Activated B cell treated with CpG ODN at 0.5 μM for 24 hours (primary cell): ENCODE measurements at regions of chr11 and their contacts with region 1.

Region 1: DNA sequence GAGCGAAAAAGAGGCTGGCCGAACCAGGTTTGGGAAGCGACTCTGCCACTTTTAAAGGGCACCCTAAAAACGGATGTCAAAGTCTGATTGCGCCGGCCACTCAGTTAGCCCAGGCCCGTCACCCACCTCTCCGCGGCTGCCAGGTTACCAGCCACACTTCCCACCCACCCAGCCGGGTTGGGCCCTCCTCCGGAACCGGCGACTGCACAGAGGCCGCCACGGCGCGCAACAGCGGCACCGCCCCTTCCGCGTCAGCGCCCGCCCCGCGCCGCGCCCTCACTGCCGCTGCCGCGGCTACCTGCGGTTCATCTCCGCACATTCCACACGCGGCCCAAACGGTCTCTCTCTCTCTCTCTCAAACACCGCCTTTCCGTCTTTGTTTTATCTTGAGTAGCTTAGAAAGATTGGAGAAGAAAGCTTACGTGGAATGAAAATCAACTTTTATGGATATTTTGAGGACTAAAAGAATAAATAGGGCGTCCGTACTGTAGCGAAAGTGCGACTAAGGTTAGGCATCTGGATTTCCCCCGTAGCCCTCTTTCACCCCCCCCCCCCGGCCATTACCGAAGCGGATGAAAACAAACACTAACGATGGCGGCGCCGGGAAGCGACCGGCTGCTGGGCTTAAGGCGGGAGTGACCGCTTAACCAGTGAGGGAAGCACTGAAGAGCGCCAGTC is at the starts of genes ATG13 and HARBI1:
- DNase-seq: peak; percentile 91
- ATAC-seq: peak; percentile 94
- H3K4me3 Mint-ChIP-seq: peak within 1 kb of the TSS; percentile 93
- H3K27ac Mint-ChIP-seq: peak within 1 kb of the TSS; percentile 100
- H3K4me1 Mint-ChIP-seq: peaks cover 30% of the 10 kb centered on the region
- H3K27me3 Mint-ChIP-seq: no peaks in the 10 kb centered on the region
- CTCF ChIP-seq: no peak
- total RNA-seq, gene ATG13: 49.1 and 73.7 TPM in 2 replicates
- total RNA-seq, gene HARBI1: 5.4 and 6.5 TPM in 2 replicates

Region 2: DNA sequence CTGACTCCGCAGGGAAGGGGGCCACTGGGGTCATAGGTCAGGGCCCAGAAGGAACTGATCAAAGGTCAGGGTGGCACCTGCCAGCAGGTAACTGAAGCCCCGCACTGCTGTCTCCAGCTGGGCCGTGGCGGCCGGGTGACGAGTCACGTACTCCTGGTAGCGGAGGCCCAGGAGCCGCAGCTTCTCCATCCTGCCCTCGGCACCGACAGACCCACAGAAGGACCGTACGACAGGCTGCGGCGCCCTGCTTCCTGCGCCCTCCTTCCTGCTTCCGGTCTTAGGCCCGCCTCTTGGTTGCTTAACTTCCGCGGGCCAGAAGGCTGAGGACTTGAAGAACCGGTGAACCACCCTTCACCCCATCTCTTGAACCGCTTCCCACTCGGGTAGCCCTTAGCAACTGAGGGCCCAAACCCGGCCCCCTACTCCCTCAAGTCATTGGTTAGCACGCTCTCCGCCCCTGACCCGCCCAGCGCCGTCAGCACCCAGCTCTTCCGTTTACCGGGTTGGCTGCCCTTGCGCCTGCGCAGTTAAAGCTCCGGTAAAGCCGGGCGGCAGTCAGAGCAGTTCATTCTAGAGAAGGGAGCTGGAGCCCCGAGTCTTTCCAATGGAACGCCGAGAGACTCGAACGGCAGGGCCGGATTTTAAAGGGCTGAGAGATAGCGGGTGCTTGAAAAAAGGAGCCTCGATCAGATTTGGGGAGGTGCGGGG is 699.4 kb before region 1 on chr11 and contains the start of gene PEX16:
- CTCF ChIA-PET with region 1: no interaction called
- POLR2A ChIA-PET with region 1: no interaction called
- intact Hi-C with region 1: loop called (anchors 1 kb)
- DNase-seq: peak; percentile 87
- ATAC-seq: peak; percentile 85
- H3K4me3 Mint-ChIP-seq: peak within 1 kb of the TSS; percentile 94
- H3K27ac Mint-ChIP-seq: peak within 1 kb of the TSS; percentile 97
- H3K4me1 Mint-ChIP-seq: peaks cover 61% of the 10 kb centered on the region
- H3K27me3 Mint-ChIP-seq: no peaks in the 10 kb centered on the region
- CTCF ChIP-seq: no peak
- total RNA-seq, gene PEX16: 72.0 and 77.7 TPM in 2 replicates

Region 3: GRCh38 chr11:46346886-46347636 is 270.1 kb before region 1 on chr11 and contains the start of gene DGKZ:
- CTCF ChIA-PET with region 1: no interaction called
- POLR2A ChIA-PET with region 1: no interaction called
- intact Hi-C with region 1: loop called (anchors 1 kb)
- DNase-seq: peak; percentile 99
- ATAC-seq: peak; percentile 93
- H3K4me3 Mint-ChIP-seq: peak within 1 kb of the TSS; percentile 90
- H3K27ac Mint-ChIP-seq: peak within 1 kb of the TSS; percentile 83
- H3K4me1 Mint-ChIP-seq: peaks cover 52% of the 10 kb centered on the region
- H3K27me3 Mint-ChIP-seq: no peaks in the 10 kb centered on the region
- CTCF ChIP-seq: no peak
- total RNA-seq, gene DGKZ: 48.1 and 53.6 TPM in 2 replicates

Region 4: GRCh38 chr11:46529095-46529905 is 87.8 kb before region 1 on chr11:
- CTCF ChIA-PET with region 1: interaction called, 4 read pairs
- POLR2A ChIA-PET with region 1: no interaction called
- intact Hi-C with region 1: loop called (anchors 1 kb)
- DNase-seq: peak; percentile 41
- ATAC-seq: peak; percentile 99
- H3K4me3 Mint-ChIP-seq: no peak overlapping the region
- H3K27ac Mint-ChIP-seq: no peak overlapping the region
- H3K4me1 Mint-ChIP-seq: peaks cover 22% of the 10 kb centered on the region
- H3K27me3 Mint-ChIP-seq: no peaks in the 10 kb centered on the region
- CTCF ChIP-seq: no peak

Region 5: DNA sequence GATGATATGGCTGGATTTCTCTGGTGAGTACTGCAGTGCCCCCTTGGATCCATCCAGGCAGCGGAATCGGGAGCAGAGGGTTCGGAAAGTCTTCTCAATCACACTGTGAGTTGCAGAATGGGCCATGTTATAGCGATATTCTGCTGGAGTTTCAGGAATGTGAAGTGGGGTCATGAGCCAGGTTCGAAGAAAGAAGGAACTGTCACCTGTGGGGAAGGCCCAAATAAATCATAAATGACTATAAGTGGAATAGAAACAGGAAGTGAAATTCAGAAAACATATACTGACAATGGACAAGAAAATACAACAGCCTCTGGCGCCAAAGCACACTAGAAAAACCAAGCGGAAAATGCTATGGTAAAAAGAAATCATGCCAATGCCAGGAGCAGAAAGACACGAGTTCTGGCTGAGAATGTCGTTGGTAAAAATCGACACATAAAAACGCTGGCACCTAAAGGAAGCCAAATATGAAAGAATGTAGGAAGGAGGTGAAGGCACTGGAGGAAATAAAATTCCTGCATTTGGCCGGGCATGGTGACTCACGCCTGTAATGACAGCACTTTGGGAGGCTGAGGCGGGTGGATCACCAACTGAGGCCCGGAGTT is 13.3 kb before region 1 on chr11:
- CTCF ChIA-PET with region 1: interaction called, 6 read pairs
- POLR2A ChIA-PET with region 1: interaction called, 6 read pairs
- intact Hi-C with region 1: loop called (anchors 2 kb)
- DNase-seq: no peak
- ATAC-seq: peak; percentile 28
- H3K4me3 Mint-ChIP-seq: no peak overlapping the region
- H3K27ac Mint-ChIP-seq: peak overlapping the region; percentile 62
- H3K4me1 Mint-ChIP-seq: peaks cover 11% of the 10 kb centered on the region
- H3K27me3 Mint-ChIP-seq: no peaks in the 10 kb centered on the region
- CTCF ChIP-seq: no peak

Region 6: GRCh38 chr11:46916286-46917108 is 299.4 kb after region 1 on chr11:
- CTCF ChIA-PET with region 1: no interaction called
- POLR2A ChIA-PET with region 1: no interaction called
- intact Hi-C with region 1: loop called (anchors 1 kb)
- DNase-seq: no peak
- ATAC-seq: peak; percentile 19
- H3K4me3 Mint-ChIP-seq: peak overlapping the region; percentile 76
- H3K27ac Mint-ChIP-seq: no peak overlapping the region
- H3K4me1 Mint-ChIP-seq: peaks cover 29% of the 10 kb centered on the region
- H3K27me3 Mint-ChIP-seq: peaks cover 62% of the 10 kb centered on the region
- CTCF ChIP-seq: no peak